CD8-positive, alpha-beta T cell (primary cell): ENCODE measurements at regions of chr10 and their contacts with region 1.

Region 1: DNA sequence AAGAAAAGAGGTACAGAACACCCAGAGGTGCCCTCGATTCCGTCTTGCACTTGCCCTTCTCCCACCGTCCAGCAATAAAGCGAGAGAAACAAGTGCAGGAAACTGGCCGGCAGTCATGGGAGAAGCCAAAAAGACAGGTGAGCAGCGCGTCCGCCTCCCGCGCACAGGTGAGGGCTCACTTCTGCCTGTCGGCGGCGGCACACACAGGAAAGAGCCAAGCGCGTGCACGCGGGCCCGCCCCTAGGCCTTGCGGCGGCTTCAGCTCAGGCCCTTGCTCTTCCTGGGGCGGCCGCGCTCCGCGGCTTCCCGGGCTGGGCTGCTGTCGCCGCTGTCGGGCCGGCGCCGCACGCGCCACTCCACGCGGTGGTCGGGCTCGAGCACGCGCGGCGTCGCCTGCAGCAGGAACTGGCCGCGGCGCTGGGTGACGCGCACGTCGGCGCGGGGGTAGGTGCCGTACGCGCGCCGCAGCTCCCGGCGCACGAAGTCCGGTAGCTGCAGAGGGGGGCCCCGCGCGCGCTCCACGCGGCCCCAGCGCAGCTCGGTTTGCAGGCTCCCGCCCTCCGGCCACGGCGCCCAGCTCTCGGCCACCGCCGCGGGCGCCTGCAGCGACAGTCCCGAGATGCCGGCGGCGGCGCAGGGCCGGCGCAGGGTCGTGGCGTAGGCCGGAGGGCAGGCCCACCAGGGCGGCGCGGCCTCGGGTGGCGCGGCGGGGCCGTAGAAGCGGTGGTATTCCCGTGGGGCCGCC is 977 bp downstream of the C10orf95 start:
- DNase-seq: peak; percentile 78 to 98 (median 89)
- ATAC-seq: peak; percentile 77
- H3K4me3 ChIP-seq: peak overlapping the region; percentile 73 to 92
- H3K4me3 Mint-ChIP-seq: peak overlapping the region; percentile 92
- H3K27ac ChIP-seq: peak overlapping the region; percentile 76 to 88
- H3K27ac Mint-ChIP-seq: peak overlapping the region; percentile 94
- H3K4me1 ChIP-seq: peaks cover 16% of the 10 kb centered on the region
- H3K4me1 Mint-ChIP-seq: peaks cover 23% of the 10 kb centered on the region
- H3K27me3 ChIP-seq: no peaks in the 10 kb centered on the region
- H3K27me3 Mint-ChIP-seq: no peaks in the 10 kb centered on the region
- CTCF ChIP-seq: no peak

Region 2: DNA sequence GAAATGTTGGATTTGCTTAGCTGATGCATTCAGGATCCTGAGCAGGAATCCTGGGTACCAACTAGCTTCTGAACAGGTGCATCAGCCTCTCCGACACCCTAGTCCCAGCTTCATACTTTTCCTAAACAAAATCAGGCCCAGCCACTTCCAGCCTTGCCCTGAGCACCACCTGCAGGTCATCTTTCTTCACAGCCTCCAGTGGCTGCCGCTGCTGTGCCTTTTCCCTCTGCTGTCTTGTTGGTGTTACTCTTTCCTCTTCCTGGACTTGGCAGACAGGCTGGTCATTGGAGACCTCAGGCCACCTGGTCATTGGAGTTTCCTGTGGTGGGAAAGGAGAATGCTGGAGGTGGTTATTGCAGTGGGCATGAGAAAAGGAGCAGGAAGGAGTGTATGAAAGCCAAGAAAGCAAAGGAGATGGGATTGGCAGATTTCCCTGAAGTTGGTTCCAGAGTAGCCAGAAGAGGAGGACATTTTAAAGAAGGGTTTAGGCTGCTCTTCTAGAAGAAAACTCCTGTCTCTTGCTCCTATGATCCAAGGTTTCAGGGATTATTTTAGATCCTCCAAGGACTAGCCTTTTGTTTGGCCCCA is 103.0 kb before region 1 on chr10:
- CTCF ChIA-PET with region 1: no interaction called
- POLR2A ChIA-PET with region 1: no interaction called
- intact Hi-C with region 1: no loop called
- DNase-seq: peak in 2 of 9 experiments; percentile 10 to 15
- ATAC-seq: no peak
- H3K4me3 ChIP-seq: no peak overlapping the region
- H3K4me3 Mint-ChIP-seq: no peak overlapping the region
- H3K27ac ChIP-seq: no peak overlapping the region
- H3K27ac Mint-ChIP-seq: peak overlapping the region; percentile 52
- H3K4me1 ChIP-seq: no peaks in the 10 kb centered on the region
- H3K4me1 Mint-ChIP-seq: no peaks in the 10 kb centered on the region
- H3K27me3 ChIP-seq: no peaks in the 10 kb centered on the region
- H3K27me3 Mint-ChIP-seq: no peaks in the 10 kb centered on the region
- CTCF ChIP-seq: no peak

Region 3: GRCh38 chr10:102399217-102400089 is 50.9 kb before region 1 on chr10:
- CTCF ChIA-PET with region 1: interaction called, 11 read pairs
- POLR2A ChIA-PET with region 1: interaction called, 34 read pairs
- intact Hi-C with region 1: loop called (anchors 1 kb)
- DNase-seq: peak; percentile 78 to 95 (median 87)
- ATAC-seq: peak; percentile 51
- H3K4me3 ChIP-seq: peak overlapping the region; percentile 44 to 65
- H3K4me3 Mint-ChIP-seq: peak overlapping the region; percentile 76
- H3K27ac ChIP-seq: peak overlapping the region; percentile 59 to 86
- H3K27ac Mint-ChIP-seq: peak overlapping the region; percentile 81
- H3K4me1 ChIP-seq: peaks cover 30% of the 10 kb centered on the region
- H3K4me1 Mint-ChIP-seq: peaks cover 38% of the 10 kb centered on the region
- H3K27me3 ChIP-seq: no peaks in the 10 kb centered on the region
- H3K27me3 Mint-ChIP-seq: no peaks in the 10 kb centered on the region
- CTCF ChIP-seq: peak; percentile 89

Region 4: GRCh38 chr10:102408728-102409603 is 41.4 kb before region 1 on chr10:
- CTCF ChIA-PET with region 1: interaction called, 5 read pairs
- POLR2A ChIA-PET with region 1: interaction called, 14 read pairs
- intact Hi-C with region 1: no loop called
- DNase-seq: peak; percentile 49 to 86 (median 79)
- ATAC-seq: peak; percentile 72
- H3K4me3 ChIP-seq: peak overlapping the region; percentile 39 to 68
- H3K4me3 Mint-ChIP-seq: peak overlapping the region; percentile 83
- H3K27ac ChIP-seq: peak overlapping the region; percentile 31 to 43
- H3K27ac Mint-ChIP-seq: peak overlapping the region; percentile 91
- H3K4me1 ChIP-seq: peaks cover 36% of the 10 kb centered on the region
- H3K4me1 Mint-ChIP-seq: peaks cover 37% of the 10 kb centered on the region
- H3K27me3 ChIP-seq: peaks cover 0 to 26% of the 10 kb centered on the region in 2 experiments
- H3K27me3 Mint-ChIP-seq: peaks cover 17% of the 10 kb centered on the region
- CTCF ChIP-seq: no peak